CD4-positive, alpha-beta memory T cell (primary cell): ENCODE measurements at regions of chr11 and their contacts with region 1.

Region 1: DNA sequence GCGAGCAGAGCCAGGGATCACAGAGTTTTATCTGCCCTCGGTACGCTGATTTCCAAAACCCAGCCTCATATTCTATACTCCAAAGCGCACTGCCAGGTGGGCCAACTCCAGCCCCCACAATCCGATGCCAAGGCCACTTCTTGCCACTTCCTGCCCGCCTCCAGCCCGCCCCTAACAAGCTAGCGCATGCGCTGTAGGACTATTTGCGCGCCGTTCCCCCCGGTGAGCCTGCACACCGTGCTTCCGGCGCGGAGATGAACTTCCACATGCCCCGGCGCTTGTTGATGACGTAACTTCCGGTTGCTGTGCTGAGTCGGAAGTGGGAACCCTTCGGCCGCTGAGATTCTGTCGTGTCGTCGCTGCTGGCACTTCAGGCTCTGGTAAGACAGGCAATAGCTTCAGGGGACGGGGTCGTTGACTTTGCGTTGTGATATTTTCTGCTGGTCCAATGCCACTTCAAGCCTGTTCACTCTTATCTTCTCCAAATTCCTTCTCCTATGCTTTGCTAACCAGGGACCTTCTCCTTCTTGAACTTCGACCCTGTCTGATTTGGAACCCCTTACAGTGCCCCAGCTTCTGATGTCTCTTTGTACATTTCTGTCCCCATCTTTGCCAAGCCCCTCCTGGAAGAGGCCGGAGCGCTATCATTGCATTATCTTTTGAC is at the start of gene UBE4A:
- DNase-seq: peak; percentile 94 to 95 (median 95)
- H3K4me3 ChIP-seq: peak within 1 kb of the TSS; percentile 82 to 83
- H3K4me3 Mint-ChIP-seq: peak within 1 kb of the TSS; percentile 93 to 100 (median 98)
- H3K27ac ChIP-seq: peak within 1 kb of the TSS; percentile 91
- H3K27ac Mint-ChIP-seq: peak within 1 kb of the TSS; percentile 95 to 100 (median 98)
- H3K4me1 ChIP-seq: peaks cover 44% of the 10 kb centered on the region
- H3K4me1 Mint-ChIP-seq: peaks cover 28 to 54% (median 45%) of the 10 kb centered on the region in 4 donors
- H3K27me3 ChIP-seq: no peaks in the 10 kb centered on the region
- H3K27me3 Mint-ChIP-seq: no peaks in the 10 kb centered on the region
- total RNA-seq, gene UBE4A: 50.3 to 52.2 TPM

Region 2: GRCh38 chr11:118295834-118296454 is 63.5 kb before region 1 on chr11:
- CTCF ChIA-PET with region 1: interaction called, 40 read pairs
- POLR2A ChIA-PET with region 1: interaction called, 7 read pairs
- intact Hi-C with region 1: no loop called
- DNase-seq: peak; percentile 46 to 59 (median 52)
- H3K4me3 ChIP-seq: no peak overlapping the region
- H3K4me3 Mint-ChIP-seq: peak overlapping the region in 1 of 8 donors; percentile 11
- H3K27ac ChIP-seq: no peak overlapping the region
- H3K27ac Mint-ChIP-seq: peak overlapping the region; percentile 0 to 88 (median 72)
- H3K4me1 ChIP-seq: peaks cover 9% of the 10 kb centered on the region
- H3K4me1 Mint-ChIP-seq: peaks cover 10 to 22% (median 14%) of the 10 kb centered on the region in 4 donors
- H3K27me3 ChIP-seq: no peaks in the 10 kb centered on the region
- H3K27me3 Mint-ChIP-seq: no peaks in the 10 kb centered on the region

Region 3: GRCh38 chr11:118304568-118305248 is 54.7 kb before region 1 on chr11 and contains the start of gene CD3E:
- CTCF ChIA-PET with region 1: interaction called, 3 read pairs
- POLR2A ChIA-PET with region 1: interaction called, 45 read pairs
- intact Hi-C with region 1: no loop called
- DNase-seq: peak; percentile 76 to 83 (median 79)
- H3K4me3 ChIP-seq: peak within 1 kb of the TSS; percentile 96 to 97
- H3K4me3 Mint-ChIP-seq: peak within 1 kb of the TSS; percentile 99 to 100 (median 100)
- H3K27ac ChIP-seq: peak within 1 kb of the TSS; percentile 91
- H3K27ac Mint-ChIP-seq: peak within 1 kb of the TSS; percentile 98 to 100 (median 99)
- H3K4me1 ChIP-seq: peaks cover 68% of the 10 kb centered on the region
- H3K4me1 Mint-ChIP-seq: peaks cover 46 to 94% (median 66%) of the 10 kb centered on the region in 4 donors
- H3K27me3 ChIP-seq: no peaks in the 10 kb centered on the region
- H3K27me3 Mint-ChIP-seq: no peaks in the 10 kb centered on the region
- total RNA-seq, gene CD3E: 581 to 618 TPM

Region 4: DNA sequence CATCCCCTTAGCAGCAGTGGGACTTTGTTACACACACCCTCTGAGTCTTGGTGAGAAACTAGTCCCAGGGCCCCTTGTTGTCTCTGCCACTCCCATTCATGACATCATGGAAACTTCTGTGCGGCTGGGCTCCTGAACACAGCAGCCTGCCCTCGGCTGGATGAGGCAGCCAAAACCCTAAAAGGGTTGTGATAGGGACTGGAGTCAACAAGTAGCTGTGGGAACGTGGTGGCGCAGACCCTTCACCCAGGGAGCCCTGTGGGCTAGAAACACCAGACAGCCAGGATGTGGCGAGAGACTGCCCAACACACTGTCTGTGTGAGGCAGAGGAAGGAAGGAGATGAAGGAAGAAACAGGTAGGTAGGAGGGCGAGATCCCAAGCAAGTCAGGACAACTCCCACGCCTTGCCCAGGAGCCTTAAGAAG is 20.8 kb before region 1 on chr11:
- CTCF ChIA-PET with region 1: interaction called, 14 read pairs
- POLR2A ChIA-PET with region 1: interaction called, 65 read pairs
- intact Hi-C with region 1: loop called (anchors 1 kb)
- DNase-seq: peak; percentile 87 to 98 (median 90)
- H3K4me3 ChIP-seq: peak overlapping the region; percentile 89 to 97
- H3K4me3 Mint-ChIP-seq: peak overlapping the region; percentile 91 to 100 (median 97)
- H3K27ac ChIP-seq: peak overlapping the region; percentile 93
- H3K27ac Mint-ChIP-seq: peak overlapping the region; percentile 98 to 100 (median 99)
- H3K4me1 ChIP-seq: peaks cover 75% of the 10 kb centered on the region
- H3K4me1 Mint-ChIP-seq: peaks cover 32 to 79% (median 55%) of the 10 kb centered on the region in 4 donors
- H3K27me3 ChIP-seq: no peaks in the 10 kb centered on the region
- H3K27me3 Mint-ChIP-seq: peaks cover 0 to 1% of the 10 kb centered on the region in 2 donors

Region 5: DNA sequence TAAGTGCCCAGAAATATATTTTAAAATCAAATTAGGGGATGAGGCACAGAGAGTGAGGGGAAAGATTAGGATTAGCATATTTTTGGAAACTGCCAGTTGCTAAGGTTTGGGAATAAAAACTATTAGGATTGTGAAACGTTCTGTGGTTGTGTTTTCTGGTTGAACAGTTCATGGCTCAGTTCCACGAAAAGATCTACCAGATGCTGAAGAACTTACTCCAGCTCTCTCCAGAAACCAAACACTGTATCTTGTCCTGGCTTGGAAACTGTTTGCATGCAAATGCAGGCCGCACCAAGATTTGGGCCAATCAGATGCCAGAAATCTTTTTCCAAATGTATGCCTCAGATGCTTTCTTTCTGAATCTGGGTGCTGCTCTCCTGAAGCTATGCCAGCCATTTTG is 15.3 kb after region 1 on chr11:
- CTCF ChIA-PET with region 1: interaction called, 10 read pairs
- POLR2A ChIA-PET with region 1: interaction called, 7 read pairs
- intact Hi-C with region 1: no loop called
- DNase-seq: no peak
- H3K4me3 ChIP-seq: no peak overlapping the region
- H3K4me3 Mint-ChIP-seq: no peak overlapping the region
- H3K27ac ChIP-seq: no peak overlapping the region
- H3K27ac Mint-ChIP-seq: peak overlapping the region in 1 of 7 donors; percentile 61
- H3K4me1 ChIP-seq: no peaks in the 10 kb centered on the region
- H3K4me1 Mint-ChIP-seq: peaks cover 0 to 2% (median 0%) of the 10 kb centered on the region in 4 donors
- H3K27me3 ChIP-seq: no peaks in the 10 kb centered on the region
- H3K27me3 Mint-ChIP-seq: no peaks in the 10 kb centered on the region

Region 6: DNA sequence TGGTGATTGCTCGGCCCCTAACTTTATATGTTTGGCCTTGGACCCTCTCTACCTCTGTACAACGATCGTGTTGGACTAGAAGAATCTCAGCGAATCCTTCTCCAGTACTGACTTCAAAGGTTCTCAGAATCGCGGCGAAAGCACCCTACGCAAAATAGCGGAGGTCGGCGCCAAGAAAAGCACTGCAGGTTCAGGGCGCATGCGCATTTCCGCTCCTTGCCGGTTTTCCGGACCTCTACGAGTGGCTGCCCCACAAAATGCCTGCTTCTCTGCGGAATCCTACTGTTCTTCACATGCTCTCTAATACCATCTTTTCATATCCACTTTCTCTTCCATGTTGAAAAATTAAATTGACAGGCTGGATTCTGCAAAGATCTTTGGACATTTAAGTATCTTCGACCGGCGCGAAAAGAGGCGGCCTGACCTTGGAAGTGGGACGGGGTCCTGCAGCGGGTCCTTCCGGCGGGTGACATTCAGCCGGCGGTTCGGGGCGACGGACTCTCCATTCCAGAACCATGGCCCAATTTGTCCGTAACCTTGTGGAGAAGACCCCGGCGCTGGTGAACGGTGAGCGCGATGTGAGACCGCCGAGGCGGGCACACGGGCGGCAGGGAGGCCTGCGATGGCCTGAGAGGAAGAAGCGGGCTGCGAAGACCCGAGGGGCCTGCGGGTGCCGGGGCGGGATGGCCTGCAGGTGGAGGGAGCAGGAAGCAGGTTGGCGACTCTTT is 41.9 kb after region 1 on chr11 and contains the start of gene ATP5MG:
- CTCF ChIA-PET with region 1: no interaction called
- POLR2A ChIA-PET with region 1: interaction called, 8 read pairs
- intact Hi-C with region 1: loop called (anchors 1 kb)
- DNase-seq: peak; percentile 92 to 94 (median 94)
- H3K4me3 ChIP-seq: peak within 1 kb of the TSS; percentile 87 to 93
- H3K4me3 Mint-ChIP-seq: peak within 1 kb of the TSS; percentile 91 to 99 (median 96)
- H3K27ac ChIP-seq: peak within 1 kb of the TSS; percentile 82
- H3K27ac Mint-ChIP-seq: peak within 1 kb of the TSS; percentile 99 to 100 (median 99)
- H3K4me1 ChIP-seq: peaks cover 72% of the 10 kb centered on the region
- H3K4me1 Mint-ChIP-seq: peaks cover 39 to 87% (median 65%) of the 10 kb centered on the region in 4 donors
- H3K27me3 ChIP-seq: no peaks in the 10 kb centered on the region
- H3K27me3 Mint-ChIP-seq: no peaks in the 10 kb centered on the region
- total RNA-seq, gene ATP5MG: 158 to 161 TPM

Region 7: DNA sequence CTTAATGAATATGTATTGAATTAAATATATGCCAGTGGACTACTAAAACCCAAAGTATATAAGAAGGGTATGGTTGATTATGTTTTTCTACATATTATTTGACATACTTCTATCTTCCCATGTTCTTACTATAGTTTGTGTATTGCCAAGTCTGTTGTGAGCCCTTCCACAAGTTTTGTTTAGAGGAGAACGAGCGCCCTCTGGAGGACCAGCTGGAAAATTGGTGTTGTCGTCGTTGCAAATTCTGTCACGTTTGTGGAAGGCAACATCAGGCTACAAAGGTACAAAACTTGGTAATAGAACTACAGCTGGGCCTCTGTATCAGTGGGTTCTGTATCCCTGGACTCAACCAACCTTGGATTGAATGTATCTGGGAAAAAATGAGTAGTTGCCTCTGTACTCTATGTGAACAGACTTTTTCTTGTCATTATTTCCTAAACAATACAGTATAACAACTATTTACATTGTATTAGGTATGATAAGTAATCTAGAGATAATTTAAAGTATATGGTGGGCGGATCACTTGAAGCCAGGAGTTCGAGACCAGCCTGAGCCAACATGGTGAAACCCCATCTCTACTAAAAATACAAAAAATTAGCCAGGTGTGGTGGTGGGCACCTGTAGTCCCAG is 129.2 kb after region 1 on chr11:
- CTCF ChIA-PET with region 1: interaction called, 5 read pairs
- POLR2A ChIA-PET with region 1: interaction called, 4 read pairs
- intact Hi-C with region 1: loop called (anchors 1 kb)
- DNase-seq: peak; percentile 79 to 83 (median 81)
- H3K4me3 ChIP-seq: no peak overlapping the region
- H3K4me3 Mint-ChIP-seq: no peak overlapping the region
- H3K27ac ChIP-seq: peak overlapping the region; percentile 10
- H3K27ac Mint-ChIP-seq: peak overlapping the region; percentile 1 to 79 (median 13)
- H3K4me1 ChIP-seq: no peaks in the 10 kb centered on the region
- H3K4me1 Mint-ChIP-seq: peaks cover 0 to 5% (median 4%) of the 10 kb centered on the region in 4 donors
- H3K27me3 ChIP-seq: no peaks in the 10 kb centered on the region
- H3K27me3 Mint-ChIP-seq: no peaks in the 10 kb centered on the region